ENCODE measurements at regions of chr17 and their contacts with region 1.

Region 1: GRCh38 chr17:79796763-79797491 is at the start of gene CBX8:
- DNase-seq: peak; percentile 100
- H3K4me3 ChIP-seq: peak within 1 kb of the TSS; percentile 48 to 80 (median 62)
- H3K27ac ChIP-seq: peak within 1 kb of the TSS; percentile 64 to 89 (median 78)
- H3K4me1 ChIP-seq: peaks cover 30 to 81% (median 71%) of the 10 kb centered on the region in 6 donors
- H3K27me3 ChIP-seq: peaks cover 35 to 79% (median 65%) of the 10 kb centered on the region in 7 donors
- CTCF ChIP-seq: peak in 8 of 11 experiments; percentile 11 to 64 (median 36)
- POLR2A ChIP-seq: no peak
- total RNA-seq, gene CBX8: 2.1 to 5.5 (median 3.2) TPM

Region 2: GRCh38 chr17:79874329-79874981 is 77.5 kb after region 1 on chr17:
- intact Hi-C with region 1: no loop called
- DNase-seq: peak; percentile 17
- H3K4me3 ChIP-seq: no peak overlapping the region
- H3K27ac ChIP-seq: no peak overlapping the region
- H3K4me1 ChIP-seq: peaks cover 0 to 5% (median 0%) of the 10 kb centered on the region in 6 donors
- H3K27me3 ChIP-seq: peaks cover 0 to 47% (median 0%) of the 10 kb centered on the region in 7 donors
- CTCF ChIP-seq: peak; percentile 13 to 64 (median 58)
- POLR2A ChIP-seq: no peak

Region 3: DNA sequence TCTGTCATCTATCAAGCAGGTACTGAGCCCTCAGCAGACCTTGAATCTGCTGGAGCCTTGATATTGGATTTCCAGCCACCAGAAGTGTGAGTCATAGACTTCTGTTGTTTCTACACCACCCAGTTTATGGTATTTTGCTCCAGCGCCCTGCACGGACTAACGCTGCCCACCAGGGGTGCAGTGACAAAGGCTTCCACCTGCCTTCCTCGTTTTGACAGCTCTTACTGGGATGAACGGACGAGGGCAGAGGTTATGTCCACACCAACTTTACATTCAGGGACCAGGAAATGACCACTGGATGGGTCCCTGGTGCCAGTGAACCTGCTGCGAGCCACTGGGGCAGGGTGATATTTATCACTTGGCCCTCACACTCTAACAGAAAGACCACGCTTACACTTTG is 108.9 kb after region 1 on chr17:
- intact Hi-C with region 1: no loop called
- DNase-seq: no peak
- H3K4me3 ChIP-seq: no peak overlapping the region
- H3K27ac ChIP-seq: no peak overlapping the region
- H3K4me1 ChIP-seq: peaks cover 0 to 6% (median 0%) of the 10 kb centered on the region in 6 donors
- H3K27me3 ChIP-seq: peaks cover 0 to 62% (median 0%) of the 10 kb centered on the region in 7 donors
- CTCF ChIP-seq: no peak
- POLR2A ChIP-seq: no peak

Region 4: GRCh38 chr17:79991140-79991923 is 194.4 kb after region 1 on chr17:
- intact Hi-C with region 1: loop called (anchors 5 kb)
- DNase-seq: peak; percentile 96
- H3K4me3 ChIP-seq: peak overlapping the region; percentile 30 to 79 (median 49)
- H3K27ac ChIP-seq: peak overlapping the region in 4 of 8 donors; percentile 15 to 90 (median 68)
- H3K4me1 ChIP-seq: peaks cover 26 to 95% (median 68%) of the 10 kb centered on the region in 6 donors
- H3K27me3 ChIP-seq: peaks cover 0 to 22% (median 0%) of the 10 kb centered on the region in 7 donors
- CTCF ChIP-seq: peak in 9 of 11 experiments; percentile 20 to 92 (median 83)
- POLR2A ChIP-seq: no peak